ENCODE measurements at regions of chr1 and their contacts with region 1.

Region 1: DNA sequence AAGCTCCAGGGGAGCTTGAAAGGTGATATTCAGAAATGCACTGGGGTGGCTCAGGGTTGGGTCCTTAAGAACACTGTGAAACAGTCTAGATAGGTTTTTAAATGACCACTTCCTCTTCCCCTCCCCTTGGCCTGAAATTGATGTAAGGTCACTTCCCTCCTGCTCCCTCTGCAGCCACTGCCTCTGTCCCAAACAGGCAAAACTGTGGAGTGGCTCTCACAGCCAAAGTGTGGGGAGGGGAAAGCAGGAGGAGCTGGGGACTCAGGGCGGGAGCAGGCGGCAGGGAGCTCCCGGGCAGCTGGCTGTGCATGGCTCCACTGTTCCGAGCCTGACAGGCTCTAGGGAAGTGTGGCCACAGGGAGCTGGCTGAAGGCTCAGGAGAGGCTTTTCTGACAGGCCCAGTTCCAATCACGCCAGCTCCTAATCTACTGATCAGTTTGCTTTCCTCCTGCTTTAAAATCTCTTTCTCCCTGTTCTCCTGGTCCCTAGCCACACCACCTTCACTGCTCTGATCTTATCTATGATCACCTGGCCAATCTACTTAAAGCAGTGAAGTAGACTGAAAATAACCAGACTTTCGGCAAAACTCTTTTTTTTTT is 5.1 kb upstream of the CSRP1 start:
- DNase-seq: no peak
- H3K4me3 ChIP-seq: no peak overlapping the region
- CTCF ChIP-seq: no peak
- POLR2A ChIP-seq: no peak

Region 2: GRCh38 chr1:201447911-201448871 is 63.8 kb before region 1 on chr1:
- intact Hi-C with region 1: loop called (anchors 10 kb)
- DNase-seq: peak in 1 of 2 donors; percentile 96
- H3K4me3 ChIP-seq: no peak overlapping the region
- CTCF ChIP-seq: no peak
- POLR2A ChIP-seq: no peak

Region 3: DNA sequence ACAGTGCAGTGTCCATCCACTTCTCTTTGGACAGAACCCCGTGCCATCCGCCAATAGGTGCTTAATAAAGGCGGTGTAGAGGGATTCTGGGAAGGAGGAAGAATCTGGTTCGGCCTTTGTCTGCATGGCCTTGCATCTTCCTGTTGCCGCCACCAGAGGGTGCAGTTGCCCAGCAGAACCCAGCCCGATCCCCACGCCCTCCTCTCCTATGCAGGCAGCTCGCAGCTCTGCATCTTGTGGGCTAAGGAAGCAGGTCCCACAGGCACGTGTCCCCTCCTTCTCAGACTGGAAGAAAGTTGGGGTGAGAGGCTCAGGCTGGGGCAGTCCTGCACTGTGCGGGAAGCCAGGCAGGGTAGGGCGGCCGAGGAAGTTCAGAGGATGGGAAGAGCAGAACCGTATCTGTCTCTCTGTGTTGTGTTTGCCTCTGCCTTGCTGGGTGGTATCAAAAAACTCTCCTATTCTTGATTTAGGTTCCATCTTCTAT is 47.7 kb after region 1 on chr1:
- intact Hi-C with region 1: no loop called
- DNase-seq: peak in 1 of 2 donors; percentile 96
- H3K4me3 ChIP-seq: no peak overlapping the region
- CTCF ChIP-seq: peak in 1 of 3 donors; percentile 83
- POLR2A ChIP-seq: no peak

Measured in lower leg skin (tissue), 4 donors.